SK-N-SH (cell line): ENCODE measurements at regions of chr3 and their contacts with region 1.

Region 1: DNA sequence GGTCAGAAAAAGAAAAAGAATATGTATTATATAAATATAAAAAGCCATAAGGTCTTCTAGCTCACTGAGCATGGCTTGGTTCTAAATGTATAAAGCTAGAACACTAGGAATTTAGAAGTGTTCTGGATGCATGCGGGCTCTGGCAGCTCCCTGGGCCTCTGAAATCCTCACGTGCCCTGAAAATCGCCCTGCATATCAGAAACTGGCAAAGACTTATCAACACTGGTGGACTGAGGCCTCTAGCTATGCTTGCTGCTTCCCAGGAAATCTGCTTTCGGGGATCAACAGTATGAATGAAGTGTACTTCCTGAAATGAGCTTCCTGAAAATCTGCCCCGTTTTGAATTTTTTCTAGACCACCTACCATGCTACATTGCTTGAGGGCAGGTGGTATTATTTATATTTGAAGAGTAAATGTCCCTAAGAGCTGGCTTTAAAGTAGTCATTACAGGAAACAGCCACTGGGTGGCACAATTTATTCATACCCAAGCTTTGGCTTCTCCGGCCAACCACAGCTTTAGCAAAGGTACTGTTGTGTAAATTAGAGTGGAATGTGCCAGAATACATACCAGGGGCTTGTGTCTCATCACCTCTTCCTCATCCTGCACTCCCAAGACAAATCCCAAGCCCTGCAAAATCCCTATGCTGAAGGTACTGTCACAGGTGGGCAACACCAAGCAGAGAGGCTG is 17.7 kb downstream of the CRTAP start:
- DNase-seq: peak; percentile 71
- H3K4me3 ChIP-seq: no peak overlapping the region; a peak in 1 of 4 replicates
- H3K27ac ChIP-seq: no peak overlapping the region
- H3K4me1 ChIP-seq: peaks cover 0 to 3% of the 10 kb centered on the region in 2 experiments; a peak in 2 of 4 replicates
- H3K27me3 ChIP-seq: no peaks in the 10 kb centered on the region
- CTCF ChIP-seq: peak; percentile 81
- EP300 ChIP-seq: no peak
- RAD21 ChIP-seq: peak; percentile 87

Region 2: GRCh38 chr3:33074217-33075067 is 57.0 kb before region 1 on chr3:
- CTCF ChIA-PET with region 1: interaction called, 10 read pairs
- POLR2A ChIA-PET with region 1: no interaction called
- DNase-seq: peak; percentile 79
- H3K4me3 ChIP-seq: no peak overlapping the region; a peak in 1 of 4 replicates
- H3K27ac ChIP-seq: no peak overlapping the region
- H3K4me1 ChIP-seq: peaks cover 0 to 21% of the 10 kb centered on the region in 2 experiments; a peak in 2 of 4 replicates
- H3K27me3 ChIP-seq: no peaks in the 10 kb centered on the region
- CTCF ChIP-seq: peak; percentile 96
- EP300 ChIP-seq: no peak
- RAD21 ChIP-seq: peak; percentile 84

Region 3: GRCh38 chr3:33144433-33144832 is 13.0 kb after region 1 on chr3:
- CTCF ChIA-PET with region 1: interaction called, 17 read pairs
- POLR2A ChIA-PET with region 1: no interaction called
- DNase-seq: no peak
- H3K4me3 ChIP-seq: no peak overlapping the region
- H3K27ac ChIP-seq: no peak overlapping the region
- H3K4me1 ChIP-seq: 0 out of 4 replicates have a peak, but pooled peaks cover 0 to 9% of the 10 kb centered on the region in 2 experiments
- H3K27me3 ChIP-seq: no peaks in the 10 kb centered on the region
- CTCF ChIP-seq: peak; percentile 52
- EP300 ChIP-seq: no peak
- RAD21 ChIP-seq: no peak

Region 4: DNA sequence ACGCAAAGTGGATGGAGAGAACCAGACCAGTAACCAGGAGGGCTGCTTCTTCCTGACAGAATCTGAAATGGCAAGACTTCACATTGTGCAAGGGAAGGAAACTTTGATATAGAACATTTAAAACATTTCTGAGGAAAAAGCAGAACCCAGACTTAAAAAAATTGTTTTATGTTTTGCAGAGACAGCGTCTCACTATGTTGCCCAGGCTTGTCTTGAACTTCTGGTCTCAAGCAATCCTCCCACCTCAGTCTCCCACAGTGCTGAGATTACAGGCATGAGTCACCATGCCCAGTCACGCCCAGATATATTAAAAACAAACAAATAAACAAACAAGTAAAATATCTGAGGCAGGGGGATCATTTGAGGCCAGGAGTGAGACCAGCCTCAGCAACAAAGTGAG is 28.5 kb after region 1 on chr3:
- CTCF ChIA-PET with region 1: no interaction called
- POLR2A ChIA-PET with region 1: no interaction called
- DNase-seq: no peak
- H3K4me3 ChIP-seq: no peak overlapping the region
- H3K27ac ChIP-seq: no peak overlapping the region
- H3K4me1 ChIP-seq: peaks cover 0 to 2% of the 10 kb centered on the region in 2 experiments; a peak in 1 of 4 replicates
- H3K27me3 ChIP-seq: no peaks in the 10 kb centered on the region
- CTCF ChIP-seq: no peak
- EP300 ChIP-seq: no peak
- RAD21 ChIP-seq: no peak

Region 5: GRCh38 chr3:33360136-33360825 is 228.8 kb after region 1 on chr3:
- CTCF ChIA-PET with region 1: interaction called, 22 read pairs
- POLR2A ChIA-PET with region 1: no interaction called
- DNase-seq: no peak
- H3K4me3 ChIP-seq: peak overlapping the region in 1 of 2 experiments; percentile 10; a peak in 1 of 4 replicates
- H3K27ac ChIP-seq: peak overlapping the region; percentile 11 to 87; a peak in 3 of 4 replicates
- H3K4me1 ChIP-seq: peaks cover 0 to 12% of the 10 kb centered on the region in 2 experiments; a peak in 1 of 4 replicates
- H3K27me3 ChIP-seq: no peaks in the 10 kb centered on the region
- CTCF ChIP-seq: no peak
- EP300 ChIP-seq: peak in 1 of 2 experiments; percentile 65; a peak in 1 of 4 replicates
- RAD21 ChIP-seq: no peak

Region 6: GRCh38 chr3:33544126-33544525 is 412.7 kb after region 1 on chr3:
- CTCF ChIA-PET with region 1: no interaction called
- POLR2A ChIA-PET with region 1: no interaction called
- DNase-seq: no peak
- H3K4me3 ChIP-seq: no peak overlapping the region
- H3K27ac ChIP-seq: no peak overlapping the region
- H3K4me1 ChIP-seq: no peaks in the 10 kb centered on the region
- H3K27me3 ChIP-seq: no peaks in the 10 kb centered on the region
- CTCF ChIP-seq: no peak
- EP300 ChIP-seq: no peak
- RAD21 ChIP-seq: no peak

Region 7: GRCh38 chr3:33787328-33788009 is 656.0 kb after region 1 on chr3:
- CTCF ChIA-PET with region 1: interaction called, 12 read pairs
- POLR2A ChIA-PET with region 1: no interaction called
- DNase-seq: peak; percentile 64
- H3K4me3 ChIP-seq: peak overlapping the region; percentile 39 to 55
- H3K27ac ChIP-seq: no peak overlapping the region
- H3K4me1 ChIP-seq: peaks cover 4 to 6% of the 10 kb centered on the region in 2 experiments; a peak in 2 of 4 replicates
- H3K27me3 ChIP-seq: no peaks in the 10 kb centered on the region
- CTCF ChIP-seq: peak; percentile 90
- EP300 ChIP-seq: no peak
- RAD21 ChIP-seq: peak; percentile 86